Mammary epithelial cell (primary cell): ENCODE measurements at regions of chr3 and their contacts with region 1.

Region 1: GRCh38 chr3:62708638-62709373 is 166.4 kb downstream of the CADPS start:
- DNase-seq: no peak
- H3K4me3 ChIP-seq: no peak overlapping the region
- H3K27ac ChIP-seq: no peak overlapping the region
- H3K4me1 ChIP-seq: no peaks in the 10 kb centered on the region
- H3K27me3 ChIP-seq: no peaks in the 10 kb centered on the region
- CTCF ChIP-seq: no peak

Region 2: DNA sequence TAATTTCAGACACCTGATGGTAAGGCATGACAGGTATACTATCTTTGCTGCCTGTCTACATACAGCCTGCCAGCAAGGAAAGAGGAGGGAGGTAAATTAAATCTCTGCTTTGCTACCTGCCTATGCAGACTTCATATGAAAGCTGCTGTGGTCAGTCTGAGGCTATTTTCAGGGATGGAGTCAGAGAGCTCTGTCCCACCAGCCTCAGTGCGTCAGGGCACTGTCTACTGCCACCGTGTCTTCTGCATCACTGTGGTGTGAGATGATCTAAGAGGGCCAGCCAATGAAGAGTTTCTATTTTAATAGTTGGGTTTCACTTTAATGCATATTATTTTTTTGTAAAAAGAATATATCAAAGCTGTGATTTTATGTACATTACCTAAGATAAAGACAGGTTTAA is 40.9 kb after region 1 on chr3:
- CTCF ChIA-PET with region 1: interaction called, 25 read pairs
- dilution Hi-C with region 1: no loop called
- in situ Hi-C with region 1: no loop called
- intact Hi-C with region 1: no loop called
- DNase-seq: no peak
- H3K4me3 ChIP-seq: no peak overlapping the region
- H3K27ac ChIP-seq: no peak overlapping the region
- H3K4me1 ChIP-seq: no peaks in the 10 kb centered on the region
- H3K27me3 ChIP-seq: no peaks in the 10 kb centered on the region
- CTCF ChIP-seq: no peak